CD8-positive, alpha-beta T cell (primary cell): ENCODE measurements at regions of chr14 and their contacts with region 1.

Region 1: GRCh38 chr14:38098074-38098836 is 109.4 kb upstream of the SSTR1 start:
- DNase-seq: no peak
- ATAC-seq: no peak
- H3K4me3 ChIP-seq: no peak overlapping the region
- H3K4me3 Mint-ChIP-seq: no peak overlapping the region
- H3K27ac ChIP-seq: no peak overlapping the region
- H3K27ac Mint-ChIP-seq: no peak overlapping the region
- H3K4me1 ChIP-seq: no peaks in the 10 kb centered on the region
- H3K4me1 Mint-ChIP-seq: peaks cover under 1% of the 10 kb centered on the region
- H3K27me3 ChIP-seq: no peaks in the 10 kb centered on the region
- H3K27me3 Mint-ChIP-seq: no peaks in the 10 kb centered on the region
- CTCF ChIP-seq: no peak

Region 2: GRCh38 chr14:38042345-38042744 is 55.9 kb before region 1 on chr14:
- CTCF ChIA-PET with region 1: no interaction called
- POLR2A ChIA-PET with region 1: no interaction called
- intact Hi-C with region 1: loop called in 1 of 2 experiments (anchors 10 kb)
- DNase-seq: no peak
- ATAC-seq: no peak
- H3K4me3 ChIP-seq: no peak overlapping the region
- H3K4me3 Mint-ChIP-seq: no peak overlapping the region
- H3K27ac ChIP-seq: no peak overlapping the region
- H3K27ac Mint-ChIP-seq: no peak overlapping the region
- H3K4me1 ChIP-seq: peaks cover 10% of the 10 kb centered on the region
- H3K4me1 Mint-ChIP-seq: peaks cover 8% of the 10 kb centered on the region
- H3K27me3 ChIP-seq: no peaks in the 10 kb centered on the region
- H3K27me3 Mint-ChIP-seq: no peaks in the 10 kb centered on the region
- CTCF ChIP-seq: no peak

Region 3: GRCh38 chr14:38138473-38139138 is 40.4 kb after region 1 on chr14:
- CTCF ChIA-PET with region 1: no interaction called
- POLR2A ChIA-PET with region 1: no interaction called
- intact Hi-C with region 1: no loop called
- DNase-seq: peak in 1 of 9 experiments; percentile 11
- ATAC-seq: no peak
- H3K4me3 ChIP-seq: no peak overlapping the region
- H3K4me3 Mint-ChIP-seq: no peak overlapping the region
- H3K27ac ChIP-seq: no peak overlapping the region
- H3K27ac Mint-ChIP-seq: no peak overlapping the region
- H3K4me1 ChIP-seq: no peaks in the 10 kb centered on the region
- H3K4me1 Mint-ChIP-seq: no peaks in the 10 kb centered on the region
- H3K27me3 ChIP-seq: no peaks in the 10 kb centered on the region
- H3K27me3 Mint-ChIP-seq: no peaks in the 10 kb centered on the region
- CTCF ChIP-seq: no peak